Common myeloid progenitor, CD34-positive (primary cell): ENCODE measurements at regions of chr2 and their contacts with region 1.

Region 1: GRCh38 chr2:231514103-231514950 is 15.9 kb downstream of the NMUR1 start:
- DNase-seq: peak; percentile 98 to 99 (median 99)
- H3K4me3 ChIP-seq: peak overlapping the region; percentile 50 to 83 (median 76)
- H3K27ac ChIP-seq: peak overlapping the region; percentile 79 to 87
- H3K4me1 ChIP-seq: peaks cover 2 to 21% (median 10%) of the 10 kb centered on the region in 4 experiments
- H3K27me3 ChIP-seq: no peaks in the 10 kb centered on the region

Region 2: DNA sequence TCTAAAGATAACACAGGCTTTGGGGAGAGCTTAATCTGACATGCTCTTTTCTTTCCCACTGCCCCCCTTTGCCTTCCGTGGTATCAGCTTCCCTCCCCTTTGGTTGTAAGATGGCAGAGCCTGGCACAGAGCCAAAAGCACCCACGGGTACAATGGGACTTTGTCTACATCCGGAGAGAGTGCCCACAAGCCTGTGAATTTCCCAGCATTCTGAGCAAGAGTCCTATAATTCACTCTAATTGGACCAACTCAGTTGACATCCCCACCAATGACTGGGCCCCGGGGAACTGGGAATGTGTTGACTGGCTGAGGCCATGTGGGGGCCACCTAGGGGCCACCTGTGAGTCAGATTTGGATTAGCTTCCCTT is 497.1 kb before region 1 on chr2:
- CTCF ChIA-PET with region 1: no interaction called
- POLR2A ChIA-PET with region 1: no interaction called
- DNase-seq: peak; percentile 47 to 78 (median 56)
- H3K4me3 ChIP-seq: no peak overlapping the region
- H3K27ac ChIP-seq: no peak overlapping the region
- H3K4me1 ChIP-seq: peaks cover 0 to 12% (median 3%) of the 10 kb centered on the region in 4 experiments
- H3K27me3 ChIP-seq: peaks cover 0 to under 1% (median 0%) of the 10 kb centered on the region in 5 experiments

Region 3: DNA sequence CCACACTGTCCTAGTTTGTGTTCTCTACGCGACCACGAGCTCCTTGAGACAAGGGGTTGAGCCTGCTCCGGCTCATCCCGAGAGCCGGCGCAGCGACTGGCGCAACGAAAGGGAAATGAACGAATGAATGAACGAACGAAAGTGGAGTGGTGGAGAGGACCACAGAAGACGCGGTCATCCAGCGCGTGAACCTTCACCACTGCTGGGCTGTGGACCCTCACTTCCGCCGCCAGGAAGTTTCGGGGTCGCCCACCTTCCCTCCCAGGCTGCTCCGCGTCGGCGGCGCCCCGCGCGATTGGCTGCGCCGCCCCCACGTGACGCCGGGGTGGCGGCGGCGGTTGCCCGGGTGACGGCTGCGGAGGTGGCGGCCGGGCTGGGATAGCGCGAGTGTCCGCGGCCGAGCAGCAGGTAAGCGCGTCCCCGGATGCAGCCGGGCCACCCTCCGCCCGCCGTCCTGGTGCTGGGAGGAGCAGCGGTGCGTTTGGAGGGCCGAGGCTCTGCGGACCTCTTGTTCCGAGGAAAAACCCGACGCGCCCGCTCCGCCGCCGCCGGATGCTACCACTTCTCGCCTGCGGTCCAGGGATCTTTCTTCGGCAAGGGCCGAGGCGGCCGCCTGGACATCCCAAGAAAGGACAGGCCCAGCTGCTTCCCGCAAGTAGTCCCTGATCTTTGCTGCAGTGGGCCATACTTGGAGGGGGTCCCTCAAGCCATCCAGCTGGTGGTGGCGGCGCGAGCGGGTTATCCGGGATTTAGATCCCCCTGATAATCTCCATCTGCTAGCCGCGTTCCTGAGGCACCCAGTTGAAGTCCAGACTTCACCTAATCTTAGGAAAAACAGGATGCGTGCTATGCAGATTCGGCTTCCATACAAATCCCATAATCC is 315.8 kb before region 1 on chr2 and contains the start of gene ARMC9:
- CTCF ChIA-PET with region 1: no interaction called
- POLR2A ChIA-PET with region 1: no interaction called
- DNase-seq: peak; percentile 34 to 58 (median 43)
- H3K4me3 ChIP-seq: peak within 1 kb of the TSS; percentile 68 to 96 (median 89)
- H3K27ac ChIP-seq: no peak within 1 kb of the TSS
- H3K4me1 ChIP-seq: peaks cover 0 to 16% (median 15%) of the 10 kb centered on the region in 4 experiments
- H3K27me3 ChIP-seq: peaks cover 0 to 3% (median 0%) of the 10 kb centered on the region in 5 experiments

Region 4: DNA sequence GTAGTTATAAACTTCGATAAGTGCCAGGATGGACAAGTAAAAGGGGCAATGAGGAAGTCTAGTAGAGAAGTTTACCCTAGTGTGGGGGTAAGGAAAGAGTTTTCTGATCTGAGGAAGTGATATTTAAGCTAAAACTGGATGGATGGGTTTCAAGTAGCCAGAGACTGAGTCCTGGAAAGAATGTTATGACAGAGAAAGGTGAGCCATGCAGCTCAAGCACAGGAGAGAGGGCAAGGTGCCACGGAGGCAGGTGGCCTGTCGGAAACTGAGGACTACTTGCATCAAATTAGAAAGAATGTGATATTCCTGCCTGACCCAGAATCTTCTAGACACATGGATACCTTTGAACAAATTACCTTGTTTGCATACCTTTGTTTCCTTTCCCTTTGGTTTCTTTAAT is 10.6 kb before region 1 on chr2:
- CTCF ChIA-PET with region 1: interaction called, 12 read pairs
- POLR2A ChIA-PET with region 1: interaction called, 3 read pairs
- DNase-seq: no peak
- H3K4me3 ChIP-seq: no peak overlapping the region
- H3K27ac ChIP-seq: no peak overlapping the region
- H3K4me1 ChIP-seq: peaks cover 0 to 4% (median 0%) of the 10 kb centered on the region in 4 experiments
- H3K27me3 ChIP-seq: no peaks in the 10 kb centered on the region

Region 5: GRCh38 chr2:231568785-231569435 is 54.6 kb after region 1 on chr2:
- CTCF ChIA-PET with region 1: interaction called, 10 read pairs
- POLR2A ChIA-PET with region 1: interaction called, 3 read pairs
- DNase-seq: peak in 2 of 3 donors; percentile 41 to 46
- H3K4me3 ChIP-seq: no peak overlapping the region
- H3K27ac ChIP-seq: no peak overlapping the region
- H3K4me1 ChIP-seq: peaks cover 0 to 9% (median 7%) of the 10 kb centered on the region in 4 experiments
- H3K27me3 ChIP-seq: no peaks in the 10 kb centered on the region